ENCODE measurements at regions of chr5 and their contacts with region 1.

Region 1: GRCh38 chr5:83927140-83927733 is 206.6 kb upstream of the HAPLN1 start:
- DNase-seq: peak; percentile 57
- ATAC-seq: peak; percentile 82
- H3K4me3 ChIP-seq: no peak overlapping the region
- H3K27ac ChIP-seq: no peak overlapping the region
- H3K4me1 ChIP-seq: peaks cover 3 to 5% of the 10 kb centered on the region in 2 experiments; a peak in 3 of 4 replicates
- H3K27me3 ChIP-seq: no peaks in the 10 kb centered on the region
- CTCF ChIP-seq: peak; percentile 76 to 91 (median 83)
- POLR2A ChIP-seq: no peak
- RAD21 ChIP-seq: peak; percentile 77

Region 2: GRCh38 chr5:83911367-83911919 is 15.8 kb before region 1 on chr5:
- CTCF ChIA-PET with region 1: interaction called, 14 read pairs
- POLR2A ChIA-PET with region 1: interaction called, 3 read pairs
- RAD21 ChIA-PET with region 1: no interaction called
- intact Hi-C with region 1: no loop called
- DNase-seq: no peak
- ATAC-seq: no peak
- H3K4me3 ChIP-seq: no peak overlapping the region
- H3K27ac ChIP-seq: no peak overlapping the region
- H3K4me1 ChIP-seq: no peaks in the 10 kb centered on the region
- H3K27me3 ChIP-seq: no peaks in the 10 kb centered on the region
- CTCF ChIP-seq: no peak
- POLR2A ChIP-seq: no peak
- RAD21 ChIP-seq: no peak

Region 3: GRCh38 chr5:83942155-83942554 is 14.9 kb after region 1 on chr5:
- CTCF ChIA-PET with region 1: interaction called, 10 read pairs
- POLR2A ChIA-PET with region 1: no interaction called
- RAD21 ChIA-PET with region 1: no interaction called
- intact Hi-C with region 1: no loop called
- DNase-seq: no peak
- ATAC-seq: no peak
- H3K4me3 ChIP-seq: no peak overlapping the region
- H3K27ac ChIP-seq: no peak overlapping the region
- H3K4me1 ChIP-seq: no peaks in the 10 kb centered on the region
- H3K27me3 ChIP-seq: no peaks in the 10 kb centered on the region
- CTCF ChIP-seq: no peak
- POLR2A ChIP-seq: no peak
- RAD21 ChIP-seq: no peak

Region 4: DNA sequence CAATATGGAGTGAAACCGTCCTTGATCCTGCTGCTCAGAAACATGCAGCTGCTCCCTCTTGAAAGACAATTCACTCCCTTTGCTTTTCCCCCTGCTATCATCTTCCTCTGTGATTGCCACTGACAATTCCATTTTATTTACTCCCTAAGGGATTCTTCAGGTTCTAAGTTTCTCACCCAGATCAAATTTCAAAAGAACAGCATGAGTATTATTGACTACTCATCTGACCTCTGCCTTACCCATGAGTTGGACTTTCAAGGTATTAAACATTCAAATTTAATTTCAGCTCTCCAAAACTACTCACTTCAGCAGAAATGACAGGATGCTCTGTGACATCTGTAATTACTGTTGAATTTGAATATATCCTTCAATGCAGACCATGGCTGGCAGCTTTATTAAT is 30.0 kb after region 1 on chr5:
- CTCF ChIA-PET with region 1: interaction called, 10 read pairs
- POLR2A ChIA-PET with region 1: no interaction called
- RAD21 ChIA-PET with region 1: no interaction called
- intact Hi-C with region 1: no loop called
- DNase-seq: no peak
- ATAC-seq: no peak
- H3K4me3 ChIP-seq: no peak overlapping the region
- H3K27ac ChIP-seq: no peak overlapping the region
- H3K4me1 ChIP-seq: peaks cover 5 to 21% of the 10 kb centered on the region in 2 experiments; a peak in 3 of 4 replicates
- H3K27me3 ChIP-seq: no peaks in the 10 kb centered on the region
- CTCF ChIP-seq: no peak
- POLR2A ChIP-seq: no peak
- RAD21 ChIP-seq: no peak

Region 5: DNA sequence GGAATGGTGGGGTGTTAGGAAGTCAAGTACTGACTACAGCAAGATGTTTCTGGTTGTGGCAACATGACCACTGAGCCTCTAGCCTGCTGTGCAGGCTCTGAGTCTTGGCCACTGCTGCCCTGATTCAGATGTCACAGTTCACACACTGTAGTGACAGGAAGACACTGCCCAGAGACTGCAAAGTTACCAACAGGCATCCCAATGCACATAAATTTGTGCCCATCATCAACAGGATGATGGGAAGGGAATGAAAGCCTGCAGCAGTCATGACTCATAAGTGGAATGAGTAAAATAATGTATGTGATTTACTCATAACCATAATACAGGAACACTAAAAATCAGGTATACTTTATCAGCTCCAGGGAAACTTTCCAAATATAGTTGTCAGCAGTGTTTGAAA is 45.0 kb after region 1 on chr5:
- CTCF ChIA-PET with region 1: no interaction called
- POLR2A ChIA-PET with region 1: no interaction called
- RAD21 ChIA-PET with region 1: no interaction called
- intact Hi-C with region 1: no loop called
- DNase-seq: no peak
- ATAC-seq: no peak
- H3K4me3 ChIP-seq: no peak overlapping the region
- H3K27ac ChIP-seq: no peak overlapping the region
- H3K4me1 ChIP-seq: no peaks in the 10 kb centered on the region
- H3K27me3 ChIP-seq: no peaks in the 10 kb centered on the region
- CTCF ChIP-seq: no peak
- POLR2A ChIP-seq: no peak
- RAD21 ChIP-seq: no peak

Region 6: DNA sequence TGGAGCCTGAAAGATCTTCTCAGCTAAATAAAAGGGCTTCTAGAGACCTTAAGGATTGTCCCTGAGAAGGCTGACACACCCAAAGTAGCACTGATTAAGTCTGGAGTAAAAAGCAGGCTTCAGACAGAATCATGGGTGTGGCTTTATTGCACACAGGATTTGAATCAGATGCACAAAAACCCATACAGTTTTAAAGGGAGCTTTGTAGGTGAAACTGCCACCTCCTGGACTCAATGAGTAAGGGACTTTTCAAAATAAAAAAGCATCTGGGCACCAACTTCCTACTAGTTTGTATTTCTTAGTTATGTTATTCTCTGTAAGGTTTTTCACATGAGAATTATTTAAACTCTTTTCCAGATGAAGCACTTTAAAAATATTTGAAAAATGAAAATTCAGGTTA is 328.1 kb after region 1 on chr5:
- CTCF ChIA-PET with region 1: interaction called, 10 read pairs
- POLR2A ChIA-PET with region 1: no interaction called
- RAD21 ChIA-PET with region 1: no interaction called
- intact Hi-C with region 1: loop called (anchors 2 kb)
- DNase-seq: peak; percentile 47
- ATAC-seq: peak; percentile 80
- H3K4me3 ChIP-seq: no peak overlapping the region
- H3K27ac ChIP-seq: no peak overlapping the region
- H3K4me1 ChIP-seq: peaks cover 0 to 3% of the 10 kb centered on the region in 2 experiments; a peak in 2 of 4 replicates
- H3K27me3 ChIP-seq: no peaks in the 10 kb centered on the region
- CTCF ChIP-seq: peak; percentile 43 to 59 (median 57); a peak in 5 of 6 replicates
- POLR2A ChIP-seq: no peak
- RAD21 ChIP-seq: peak; percentile 61